Panc1 (cell line): ENCODE measurements at regions of chr16 and their contacts with region 1.

Region 1: GRCh38 chr16:30076276-30076791 is 540 bp downstream of the PPP4C start:
- DNase-seq: no peak
- ATAC-seq: peak; percentile 13
- H3K4me3 ChIP-seq: peak overlapping the region; percentile 87 to 88
- H3K27ac ChIP-seq: peak overlapping the region; percentile 92
- H3K4me1 ChIP-seq: peaks cover 13% of the 10 kb centered on the region
- H3K27me3 ChIP-seq: no peaks in the 10 kb centered on the region
- CTCF ChIP-seq: no peak

Region 2: GRCh38 chr16:28935924-28936783 is 1140.2 kb before region 1 on chr16:
- CTCF ChIA-PET with region 1: no interaction called
- POLR2A ChIA-PET with region 1: no interaction called
- in situ Hi-C with region 1: no loop called
- intact Hi-C with region 1: no loop called
- DNase-seq: no peak
- ATAC-seq: peak; percentile 85
- H3K4me3 ChIP-seq: peak overlapping the region in 1 of 2 experiments; percentile 23; a peak in 2 of 4 replicates
- H3K27ac ChIP-seq: no peak overlapping the region
- H3K4me1 ChIP-seq: no peaks in the 10 kb centered on the region
- H3K27me3 ChIP-seq: no peaks in the 10 kb centered on the region
- CTCF ChIP-seq: no peak

Region 3: GRCh38 chr16:29983420-29984136 is 92.8 kb before region 1 on chr16:
- CTCF ChIA-PET with region 1: no interaction called
- POLR2A ChIA-PET with region 1: no interaction called
- in situ Hi-C with region 1: no loop called
- intact Hi-C with region 1: no loop called
- DNase-seq: no peak
- ATAC-seq: no peak
- H3K4me3 ChIP-seq: no peak overlapping the region
- H3K27ac ChIP-seq: no peak overlapping the region
- H3K4me1 ChIP-seq: no peaks in the 10 kb centered on the region
- H3K27me3 ChIP-seq: no peaks in the 10 kb centered on the region
- CTCF ChIP-seq: no peak

Region 4: DNA sequence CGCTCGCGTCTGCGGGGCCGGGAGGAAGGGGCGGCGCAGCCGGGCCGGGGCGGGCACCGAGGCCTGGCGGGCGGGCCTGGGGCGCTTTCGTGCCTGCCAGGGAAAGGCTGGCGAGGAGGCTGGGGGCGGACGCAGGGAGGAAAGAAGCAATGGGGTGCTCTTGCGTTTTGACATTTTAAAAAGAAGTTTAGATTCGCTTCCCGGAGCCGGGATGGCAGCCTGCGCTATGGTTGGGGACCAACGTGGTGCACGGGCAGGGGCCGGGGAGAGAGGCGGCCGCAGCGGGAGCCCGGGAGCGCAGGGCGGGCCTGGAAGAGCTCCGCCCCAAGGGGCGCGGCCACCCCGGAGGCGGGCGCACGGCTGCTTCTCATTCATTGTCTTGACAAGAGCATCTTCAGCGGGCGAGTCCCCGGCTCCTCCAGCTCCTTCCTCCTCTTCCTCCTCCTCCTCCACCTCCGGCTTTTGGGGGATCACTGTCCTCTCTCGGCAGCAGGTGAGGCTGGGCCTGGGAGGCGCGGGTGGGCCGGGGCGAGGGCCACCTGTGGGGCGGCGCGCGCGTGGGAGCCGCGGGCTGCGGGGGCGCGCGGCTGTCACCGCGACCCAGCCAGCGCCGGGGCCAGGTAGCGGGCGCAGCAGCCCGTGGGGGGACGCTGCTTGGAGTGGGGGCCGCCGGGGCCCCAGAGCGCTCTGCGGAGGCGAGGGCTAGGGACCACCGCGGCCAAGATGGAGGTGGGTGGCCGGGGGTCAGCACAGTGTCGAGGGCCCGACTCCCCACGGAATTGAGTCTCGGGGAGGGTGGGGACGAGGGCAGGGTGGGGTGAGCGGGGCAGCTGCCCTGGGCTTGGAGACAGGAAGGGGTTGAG is 107.1 kb after region 1 on chr16 and contains the start of gene CORO1A:
- CTCF ChIA-PET with region 1: no interaction called
- POLR2A ChIA-PET with region 1: interaction called, 13 read pairs
- in situ Hi-C with region 1: no loop called
- intact Hi-C with region 1: no loop called
- DNase-seq: peak; percentile 7
- ATAC-seq: peak; percentile 89
- H3K4me3 ChIP-seq: peak within 1 kb of the TSS; percentile 56 to 62
- H3K27ac ChIP-seq: peak within 1 kb of the TSS; percentile 44
- H3K4me1 ChIP-seq: peaks cover 6% of the 10 kb centered on the region
- H3K27me3 ChIP-seq: no peaks in the 10 kb centered on the region
- CTCF ChIP-seq: no peak
- total RNA-seq, gene CORO1A: 3.7 TPM